IMR-90 (cell line): ENCODE measurements at regions of chr9 and their contacts with region 1.

Region 1: DNA sequence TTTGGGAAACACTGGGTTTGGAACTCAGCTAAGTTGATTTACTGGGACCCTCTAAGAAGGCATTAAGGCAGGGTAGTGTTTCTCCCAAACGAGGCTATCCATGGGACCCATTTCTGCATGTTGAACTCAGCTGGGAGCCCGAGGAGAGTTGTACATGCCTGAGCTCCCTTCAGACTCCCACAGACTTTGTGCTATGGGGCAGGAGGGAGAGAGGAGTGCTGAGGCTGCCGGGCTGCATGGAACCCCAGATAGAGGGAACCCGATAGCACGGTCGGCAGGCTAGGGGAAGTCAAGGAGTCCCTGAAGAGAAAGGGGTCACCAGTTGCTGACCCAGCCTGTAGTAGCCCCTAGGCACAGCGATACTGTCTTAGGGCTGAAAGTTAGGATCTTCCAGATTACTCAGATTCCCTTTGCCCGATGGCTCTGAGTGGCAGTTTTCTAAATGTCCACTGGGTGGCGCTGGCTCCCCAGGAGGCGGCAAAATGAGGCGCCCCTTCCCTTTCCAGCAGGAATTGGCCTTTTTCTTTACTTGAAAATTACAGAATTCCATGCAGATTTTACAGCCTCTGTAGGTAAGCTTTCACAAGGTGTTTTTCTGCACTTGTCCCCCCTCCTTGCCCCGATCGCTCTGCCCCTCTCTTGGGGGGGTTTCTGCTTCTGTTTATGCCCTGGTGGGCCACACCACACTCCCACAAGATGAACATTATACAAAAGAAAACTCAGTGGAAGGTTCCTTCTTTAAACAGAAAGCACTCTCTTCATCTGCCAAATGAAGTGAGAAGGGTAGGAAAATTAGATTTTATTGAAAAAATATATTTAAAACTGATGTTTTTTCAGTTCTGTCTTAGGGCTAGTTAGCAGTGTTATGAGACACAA is 17.8 kb downstream of the NANS start:
- DNase-seq: peak; percentile 59
- ATAC-seq: peak; percentile 91
- H3K4me3 ChIP-seq: no peak overlapping the region
- H3K27ac ChIP-seq: 0 out of 2 replicates have a peak overlapping the region, but pooled peaks have one; percentile 0
- H3K4me1 ChIP-seq: peaks cover 5% of the 10 kb centered on the region
- H3K27me3 ChIP-seq: no peaks in the 10 kb centered on the region
- CTCF ChIP-seq: peak; percentile 94
- POLR2A ChIP-seq: no peak
- RAD21 ChIP-seq: peak; percentile 85

Region 2: DNA sequence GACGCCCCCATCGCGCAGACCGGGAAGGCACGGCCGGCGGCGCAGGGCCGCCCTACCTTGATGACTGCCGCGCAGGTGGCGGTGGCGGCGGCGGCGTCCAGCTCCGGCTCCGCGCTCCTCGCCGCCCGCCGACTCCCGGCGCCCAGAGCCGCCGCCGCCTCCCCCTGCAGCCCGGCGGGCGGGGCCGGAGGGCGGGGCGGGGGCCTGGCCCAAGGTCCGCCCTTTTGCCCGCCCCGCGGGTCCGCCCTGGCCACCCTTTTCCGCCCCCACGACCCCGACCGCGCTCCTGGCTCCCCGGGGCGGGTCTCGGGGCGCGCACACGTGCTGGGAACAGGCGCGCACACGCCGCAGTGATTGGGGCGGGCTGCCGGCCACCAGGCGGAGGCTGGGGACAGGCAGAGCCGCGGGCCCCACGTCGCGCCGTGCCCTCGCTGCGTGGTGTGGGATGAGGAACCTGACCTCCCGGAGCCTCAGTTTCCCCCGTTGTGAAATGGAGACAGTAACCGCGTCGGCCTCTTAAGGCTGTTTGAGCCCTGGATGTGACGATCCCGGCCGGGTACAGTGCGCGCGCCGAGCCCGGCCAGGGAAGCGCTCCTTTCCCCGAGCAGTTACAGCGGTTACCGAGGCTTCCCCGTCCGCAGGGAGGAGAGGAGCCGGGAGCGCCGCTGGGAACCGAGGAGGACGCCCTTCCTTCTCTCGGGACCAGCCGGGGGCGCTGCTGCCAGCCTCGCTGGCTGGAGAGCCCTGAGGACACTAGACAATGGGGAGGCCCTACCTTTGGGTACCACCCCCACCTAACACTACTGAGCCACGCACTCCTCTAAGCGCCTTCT is 118.4 kb after region 1 on chr9 and contains the start of gene CORO2A:
- CTCF ChIA-PET with region 1: no interaction called
- POLR2A ChIA-PET with region 1: no interaction called
- dilution Hi-C with region 1: no loop called
- in situ Hi-C with region 1: no loop called
- intact Hi-C with region 1: loop called (anchors 5 kb)
- DNase-seq: peak; percentile 63
- ATAC-seq: peak; percentile 94
- H3K4me3 ChIP-seq: peak within 1 kb of the TSS; percentile 77
- H3K27ac ChIP-seq: peak within 1 kb of the TSS; percentile 14; the same call in 1 of the 2 replicates
- H3K4me1 ChIP-seq: peaks cover 3% of the 10 kb centered on the region
- H3K27me3 ChIP-seq: 0 out of 2 replicates have a peak, but pooled peaks cover 3% of the 10 kb centered on the region
- CTCF ChIP-seq: peak; percentile 59
- POLR2A ChIP-seq: no peak
- RAD21 ChIP-seq: peak; percentile 48
- total RNA-seq, gene CORO2A: 1.9 and 2.2 TPM in 2 replicates

Region 3: DNA sequence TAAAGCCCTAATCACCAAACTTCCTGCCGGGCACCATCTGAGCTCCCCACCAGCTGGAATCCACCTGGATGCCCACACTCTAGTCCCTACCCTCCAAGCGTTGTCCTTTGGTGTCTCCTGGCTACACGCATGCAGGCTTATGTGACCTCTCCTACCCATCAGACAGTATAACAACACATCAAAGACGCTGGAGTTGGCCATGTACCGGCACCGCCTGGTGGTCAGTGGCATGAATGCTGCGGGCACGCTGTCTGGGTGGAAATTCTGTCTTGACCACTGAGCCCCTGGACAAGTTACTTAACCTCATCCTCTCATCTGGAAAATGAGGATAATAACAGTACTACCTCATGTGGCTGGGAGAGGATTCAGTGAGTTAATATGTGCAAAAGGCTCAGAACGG is 141.5 kb after region 1 on chr9:
- CTCF ChIA-PET with region 1: no interaction called
- POLR2A ChIA-PET with region 1: no interaction called
- dilution Hi-C with region 1: no loop called
- in situ Hi-C with region 1: no loop called
- intact Hi-C with region 1: no loop called
- DNase-seq: no peak
- ATAC-seq: peak; percentile 43
- H3K4me3 ChIP-seq: no peak overlapping the region
- H3K27ac ChIP-seq: no peak overlapping the region
- H3K4me1 ChIP-seq: peaks cover 11% of the 10 kb centered on the region
- H3K27me3 ChIP-seq: no peaks in the 10 kb centered on the region
- CTCF ChIP-seq: peak; percentile 32; the same call in 1 of the 2 replicates
- POLR2A ChIP-seq: no peak
- RAD21 ChIP-seq: no peak; the same call in 1 of the 2 replicates